Right ventricle myocardium inferior (tissue), 1 donor: ENCODE measurements at regions of chr5 and their contacts with region 1.

Region 1: GRCh38 chr5:40679155-40679913 is 381 bp upstream of the PTGER4 start:
- DNase-seq: peak; percentile 96
- ATAC-seq: peak; percentile 97

Region 2: GRCh38 chr5:40391642-40392041 is 287.7 kb before region 1 on chr5:
- intact Hi-C with region 1: loop called (anchors 5 kb)
- DNase-seq: no peak
- ATAC-seq: no peak

Region 3: DNA sequence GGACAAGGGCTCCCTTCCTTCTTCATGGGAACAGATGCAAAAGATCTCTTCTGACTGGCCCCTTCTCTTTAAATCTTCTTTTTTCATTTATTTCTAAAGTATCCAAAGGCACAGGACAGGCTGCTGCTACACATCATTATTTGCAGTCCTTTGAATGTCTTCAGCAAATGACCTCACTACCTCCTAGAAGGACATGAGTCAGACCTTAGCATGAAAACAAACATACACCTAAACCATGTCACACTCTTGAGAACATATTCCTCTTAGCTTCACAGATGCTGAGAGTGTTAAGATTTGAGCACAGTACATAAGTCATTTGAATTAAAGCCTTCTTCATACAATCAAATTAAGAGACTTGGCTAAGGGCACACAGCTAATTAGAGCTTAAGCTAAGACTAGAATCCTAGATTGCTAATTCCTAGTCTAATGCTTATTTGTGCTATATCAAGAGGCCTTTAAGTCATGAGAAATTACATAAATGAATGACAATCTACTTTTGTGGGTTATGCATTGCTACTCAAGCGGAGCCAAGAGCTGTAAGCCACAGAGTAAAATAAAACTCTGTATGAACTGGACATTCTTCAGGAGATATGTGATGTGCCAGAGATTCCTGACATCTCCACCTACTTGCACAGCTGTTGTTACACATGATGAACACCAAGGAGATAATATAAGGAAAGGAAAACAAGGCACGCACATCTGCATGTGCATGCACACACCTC is 108.8 kb before region 1 on chr5:
- intact Hi-C with region 1: loop called (anchors 5 kb)
- DNase-seq: no peak
- ATAC-seq: peak; percentile 49

Region 4: GRCh38 chr5:40623480-40624420 is 55.6 kb before region 1 on chr5:
- intact Hi-C with region 1: loop called (anchors 5 kb)
- DNase-seq: no peak
- ATAC-seq: no peak